Posterior vena cava (tissue), 2 donors: ENCODE measurements at regions of chr7 and their contacts with region 1.

Region 1: GRCh38 chr7:135801045-135801693 is 52.6 kb upstream of the FAM180A start:
- DNase-seq: no peak

Region 2: DNA sequence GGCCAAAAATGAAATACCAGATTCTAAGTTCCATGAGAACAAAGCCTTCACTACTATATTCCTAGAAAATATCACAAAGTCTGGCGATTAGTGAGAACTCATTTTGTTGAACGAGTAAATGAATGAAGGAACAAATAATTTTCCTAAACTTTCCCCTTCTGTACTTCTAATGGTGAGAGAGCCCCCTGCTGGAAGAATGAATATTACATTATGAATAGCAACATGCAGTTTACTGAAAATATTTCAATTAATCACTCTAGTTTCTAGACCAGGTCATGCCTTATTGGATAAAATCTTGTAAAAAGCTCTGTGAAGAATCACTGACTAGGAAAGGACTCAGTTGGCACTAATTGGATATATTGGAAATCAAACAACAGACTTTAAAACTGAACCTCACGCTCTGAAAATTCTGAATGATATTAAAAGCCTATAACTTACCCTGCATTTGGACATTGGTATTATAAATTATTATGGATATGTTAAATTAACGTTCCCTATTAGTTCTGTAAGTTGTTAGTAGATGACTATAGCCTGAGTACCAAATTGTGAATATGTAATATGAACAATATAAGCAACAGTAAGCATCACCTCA is 208.4 kb after region 1 on chr7:
- intact Hi-C with region 1: loop called (anchors 1 to 5 kb)
- DNase-seq: no peak